Activated CD4-positive, alpha-beta T cell treated with anti-CD3 and anti-CD28 coated beads for 36 hours (primary cell): ENCODE measurements at regions of chr22 and their contacts with region 1.

Region 1: DNA sequence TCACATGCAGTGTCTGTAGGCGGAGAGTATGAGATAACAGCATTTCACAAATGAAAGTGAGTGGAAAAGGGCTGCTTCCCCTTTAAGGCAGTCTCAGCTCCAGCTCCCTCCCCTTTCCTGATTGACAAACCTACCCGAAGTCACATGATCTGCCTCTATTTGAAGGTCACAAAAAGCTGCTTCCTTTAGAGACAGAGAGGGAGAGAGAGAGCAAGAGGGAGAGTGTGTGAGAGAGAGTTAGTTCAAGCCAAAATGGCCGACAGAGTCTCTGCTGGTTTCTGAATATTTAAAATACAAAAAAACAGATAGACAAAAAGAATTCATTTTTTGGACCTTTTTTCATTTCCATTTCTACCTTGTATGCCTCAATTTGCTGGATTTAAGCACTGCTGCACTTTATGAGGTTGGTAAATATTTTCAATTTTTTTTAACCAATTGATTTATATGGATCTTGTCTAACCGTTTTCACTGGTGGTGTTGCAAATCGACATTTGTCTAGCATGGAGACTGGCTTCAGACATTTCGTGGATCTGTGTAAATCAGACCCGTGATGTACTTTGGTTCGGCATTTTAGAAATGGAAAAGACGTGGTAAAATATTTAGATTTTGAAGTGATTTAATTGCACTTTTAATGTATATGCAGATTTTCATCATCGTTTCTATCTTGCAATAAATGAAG is at the start of gene TNRC6B:
- DNase-seq: peak; percentile 82
- ATAC-seq: peak; percentile 77
- H3K4me3 Mint-ChIP-seq: peak within 1 kb of the TSS; percentile 89
- H3K27ac Mint-ChIP-seq: peak within 1 kb of the TSS; percentile 92
- H3K4me1 Mint-ChIP-seq: peaks cover 57% of the 10 kb centered on the region
- H3K27me3 Mint-ChIP-seq: no peaks in the 10 kb centered on the region
- total RNA-seq, gene TNRC6B: 37.3 to 40.3 TPM

Region 2: DNA sequence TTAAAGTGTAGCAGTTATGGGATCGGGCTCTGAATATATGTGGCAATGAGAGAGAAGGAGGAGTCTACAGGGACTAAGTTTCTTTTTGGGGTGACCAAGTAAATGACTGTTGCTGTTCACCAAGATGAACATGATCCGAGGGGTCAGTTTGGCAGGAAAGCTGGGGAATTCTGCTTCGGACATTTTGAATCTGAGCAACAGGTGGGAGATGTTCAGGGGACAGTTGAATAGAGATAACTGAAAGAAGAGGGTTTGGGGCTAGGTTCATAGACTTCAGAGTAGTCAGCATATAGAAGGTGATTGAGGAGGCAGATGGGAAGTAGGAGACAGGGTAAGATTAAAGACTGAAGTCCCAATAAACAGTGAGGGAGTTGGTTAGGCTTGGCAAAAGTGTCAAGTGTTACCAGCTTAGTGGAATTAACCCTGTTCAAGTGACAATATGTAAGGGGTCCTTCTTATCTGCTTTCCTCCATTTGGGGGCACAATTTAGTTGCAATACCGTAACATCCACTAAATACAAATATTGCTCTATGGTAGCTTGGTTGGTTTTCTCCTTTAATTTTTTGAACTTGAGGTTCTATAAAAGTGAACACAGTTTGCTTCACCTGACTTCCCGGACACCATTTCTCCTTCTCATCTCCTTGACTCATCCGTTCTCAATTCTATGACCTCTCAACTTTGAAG is 281.4 kb before region 1 on chr22:
- CTCF ChIA-PET with region 1: no interaction called
- POLR2A ChIA-PET with region 1: no interaction called
- intact Hi-C with region 1: no loop called
- DNase-seq: no peak
- ATAC-seq: no peak
- H3K4me3 Mint-ChIP-seq: no peak overlapping the region
- H3K27ac Mint-ChIP-seq: no peak overlapping the region
- H3K4me1 Mint-ChIP-seq: peaks cover 36% of the 10 kb centered on the region
- H3K27me3 Mint-ChIP-seq: no peaks in the 10 kb centered on the region

Region 3: GRCh38 chr22:40044102-40044869 is 133.6 kb before region 1 on chr22:
- CTCF ChIA-PET with region 1: interaction called, 4 read pairs
- POLR2A ChIA-PET with region 1: interaction called, 71 read pairs
- intact Hi-C with region 1: loop called (anchors 1 kb)
- DNase-seq: peak; percentile 98
- ATAC-seq: peak; percentile 91
- H3K4me3 Mint-ChIP-seq: peak overlapping the region; percentile 87
- H3K27ac Mint-ChIP-seq: peak overlapping the region; percentile 99
- H3K4me1 Mint-ChIP-seq: peaks cover 24% of the 10 kb centered on the region
- H3K27me3 Mint-ChIP-seq: peaks cover 2% of the 10 kb centered on the region

Region 4: GRCh38 chr22:40107851-40108378 is 70.0 kb before region 1 on chr22:
- CTCF ChIA-PET with region 1: no interaction called
- POLR2A ChIA-PET with region 1: interaction called, 6 read pairs
- intact Hi-C with region 1: loop called (anchors 5 kb)
- DNase-seq: peak; percentile 65
- ATAC-seq: peak; percentile 88
- H3K4me3 Mint-ChIP-seq: peak overlapping the region; percentile 68
- H3K27ac Mint-ChIP-seq: peak overlapping the region; percentile 91
- H3K4me1 Mint-ChIP-seq: peaks cover 80% of the 10 kb centered on the region
- H3K27me3 Mint-ChIP-seq: no peaks in the 10 kb centered on the region

Region 5: GRCh38 chr22:40215266-40215665 is 37.4 kb after region 1 on chr22:
- CTCF ChIA-PET with region 1: interaction called, 3 read pairs
- POLR2A ChIA-PET with region 1: interaction called, 4 read pairs
- intact Hi-C with region 1: loop called in 1 of 2 experiments (anchors 5 kb)
- DNase-seq: no peak
- ATAC-seq: no peak
- H3K4me3 Mint-ChIP-seq: no peak overlapping the region
- H3K27ac Mint-ChIP-seq: peak overlapping the region; percentile 92
- H3K4me1 Mint-ChIP-seq: peaks cover 86% of the 10 kb centered on the region
- H3K27me3 Mint-ChIP-seq: no peaks in the 10 kb centered on the region

Region 6: DNA sequence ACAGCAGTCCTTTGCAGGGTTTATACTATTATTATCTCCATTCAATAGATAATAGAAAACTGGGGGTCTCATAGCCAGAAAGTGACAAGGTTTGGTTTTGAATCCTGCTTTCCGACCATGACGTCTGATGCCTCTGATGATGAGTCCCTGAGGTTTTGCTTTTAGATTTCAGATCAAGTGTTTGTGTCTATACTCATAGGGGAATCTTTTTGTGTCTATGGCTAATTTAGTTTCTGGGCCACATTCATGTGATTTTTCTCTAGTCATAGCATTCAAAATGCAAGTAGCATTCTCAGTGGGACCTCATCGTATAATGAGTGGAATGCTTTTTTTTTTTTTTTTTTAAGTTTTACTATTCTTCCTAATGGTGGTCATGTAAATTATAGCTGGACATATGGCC is 72.7 kb after region 1 on chr22:
- CTCF ChIA-PET with region 1: no interaction called
- POLR2A ChIA-PET with region 1: interaction called, 3 read pairs
- intact Hi-C with region 1: loop called in 1 of 2 experiments (anchors 2 kb)
- DNase-seq: peak; percentile 66
- ATAC-seq: peak; percentile 86
- H3K4me3 Mint-ChIP-seq: no peak overlapping the region
- H3K27ac Mint-ChIP-seq: peak overlapping the region; percentile 69
- H3K4me1 Mint-ChIP-seq: peaks cover 71% of the 10 kb centered on the region
- H3K27me3 Mint-ChIP-seq: no peaks in the 10 kb centered on the region

Region 7: DNA sequence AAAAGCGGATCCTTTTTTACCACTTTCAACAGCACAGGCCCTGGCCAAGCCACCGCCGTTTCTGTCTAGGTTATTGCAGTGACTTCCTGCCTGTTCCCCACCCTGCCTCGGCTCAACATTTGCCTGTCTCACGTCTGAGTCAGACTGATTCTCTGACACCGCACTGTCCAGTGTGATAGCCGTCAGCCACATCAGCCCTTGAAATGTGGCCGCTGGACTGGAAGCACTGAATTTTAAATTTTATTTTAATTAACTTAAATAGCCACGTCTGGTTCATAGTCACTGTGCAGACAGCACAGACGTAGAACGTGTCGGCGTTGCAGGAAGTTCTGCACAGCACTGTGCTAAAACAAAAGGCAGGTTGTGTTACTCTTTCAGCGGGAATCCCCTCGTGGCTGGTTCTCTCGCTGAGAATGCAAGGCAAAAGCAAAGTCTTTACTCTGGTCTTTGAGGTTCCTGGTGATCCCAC is 112.1 kb after region 1 on chr22:
- CTCF ChIA-PET with region 1: no interaction called
- POLR2A ChIA-PET with region 1: interaction called, 3 read pairs
- intact Hi-C with region 1: loop called in 1 of 2 experiments (anchors 2 kb)
- DNase-seq: peak; percentile 83
- ATAC-seq: peak; percentile 78
- H3K4me3 Mint-ChIP-seq: peak overlapping the region; percentile 63
- H3K27ac Mint-ChIP-seq: peak overlapping the region; percentile 98
- H3K4me1 Mint-ChIP-seq: peaks cover 68% of the 10 kb centered on the region
- H3K27me3 Mint-ChIP-seq: no peaks in the 10 kb centered on the region

Region 8: DNA sequence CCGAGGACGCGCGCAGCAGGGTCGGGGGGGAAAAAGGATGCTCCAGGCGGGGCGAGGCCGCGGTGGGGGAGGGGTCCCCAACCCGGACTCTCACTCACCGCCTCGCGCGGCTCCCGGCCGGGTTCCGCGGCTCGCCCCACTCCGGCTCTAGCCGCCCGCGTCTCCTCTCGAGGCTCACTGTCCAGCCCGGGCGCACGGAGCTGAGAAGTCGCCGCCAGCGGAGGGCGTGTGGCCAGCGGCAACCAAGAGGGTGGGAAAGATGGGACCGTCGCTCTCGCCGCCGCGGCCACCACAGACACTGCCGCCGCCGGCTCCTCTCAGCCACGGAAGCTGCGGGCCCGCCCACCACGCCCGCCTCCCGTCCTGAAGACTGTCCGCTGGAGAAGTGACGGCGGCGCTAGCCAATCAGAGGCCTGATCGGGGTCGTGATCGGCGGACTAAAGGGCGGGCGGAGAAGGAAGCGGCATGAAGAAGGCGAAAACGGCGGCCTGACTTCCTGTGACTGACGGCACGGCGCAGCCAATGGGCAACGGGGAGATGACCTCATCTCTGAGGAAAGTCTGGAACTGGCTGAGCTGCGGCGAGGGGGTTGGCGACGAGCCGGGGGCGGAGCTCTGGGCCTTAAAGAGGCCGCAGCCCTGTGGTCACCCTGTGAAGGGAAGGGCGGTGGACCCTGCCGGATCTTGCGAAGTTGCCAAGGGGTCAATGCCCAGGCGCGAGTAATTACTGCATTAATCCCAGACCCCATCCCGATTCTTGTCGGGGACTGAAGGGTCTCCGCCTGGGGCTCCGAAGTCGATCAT is 458.7 kb after region 1 on chr22 and contains the start of gene MRTFA:
- CTCF ChIA-PET with region 1: no interaction called
- POLR2A ChIA-PET with region 1: no interaction called
- intact Hi-C with region 1: loop called in 1 of 2 experiments (anchors 1 kb)
- DNase-seq: peak; percentile 100
- ATAC-seq: peak; percentile 96
- H3K4me3 Mint-ChIP-seq: peak within 1 kb of the TSS; percentile 85
- H3K27ac Mint-ChIP-seq: peak within 1 kb of the TSS; percentile 93
- H3K4me1 Mint-ChIP-seq: peaks cover 43% of the 10 kb centered on the region
- H3K27me3 Mint-ChIP-seq: no peaks in the 10 kb centered on the region
- total RNA-seq, gene MRTFA: 41.0 to 43.2 TPM